ENCODE measurements at regions of chr6 and their contacts with region 1.

Region 1: GRCh38 chr6:31525932-31526591 is 2.7 kb upstream of the MCCD1 start:
- DNase-seq: peak; percentile 80
- H3K4me3 ChIP-seq: no peak overlapping the region
- H3K27ac ChIP-seq: peak overlapping the region; percentile 98
- H3K4me1 ChIP-seq: peaks cover 24% of the 10 kb centered on the region
- H3K27me3 ChIP-seq: no peaks in the 10 kb centered on the region
- CTCF ChIP-seq: no peak
- POLR2A ChIP-seq: no peak

Region 2: GRCh38 chr6:31541658-31542521 is 15.8 kb after region 1 on chr6 and contains the start of gene DDX39B:
- CTCF ChIA-PET with region 1: interaction called, 3 read pairs
- POLR2A ChIA-PET with region 1: interaction called, 4 read pairs
- dilution Hi-C with region 1: no loop called
- intact Hi-C with region 1: loop called (anchors 1 kb)
- DNase-seq: peak; percentile 97
- H3K4me3 ChIP-seq: peak within 1 kb of the TSS; percentile 59 to 95 (median 80)
- H3K27ac ChIP-seq: peak within 1 kb of the TSS; percentile 85
- H3K4me1 ChIP-seq: peaks cover 28% of the 10 kb centered on the region
- H3K27me3 ChIP-seq: no peaks in the 10 kb centered on the region
- CTCF ChIP-seq: no peak
- POLR2A ChIP-seq: peak; percentile 96
- total RNA-seq, gene DDX39B: 453 and 481 TPM in 2 replicates

Region 3: GRCh38 chr6:31559958-31560696 is 34.1 kb after region 1 on chr6:
- CTCF ChIA-PET with region 1: no interaction called
- POLR2A ChIA-PET with region 1: no interaction called
- dilution Hi-C with region 1: no loop called
- intact Hi-C with region 1: loop called (anchors 1 kb)
- DNase-seq: peak; percentile 99
- H3K4me3 ChIP-seq: peak overlapping the region in 1 of 3 experiments; percentile 29
- H3K27ac ChIP-seq: peak overlapping the region; percentile 98
- H3K4me1 ChIP-seq: peaks cover 69% of the 10 kb centered on the region
- H3K27me3 ChIP-seq: no peaks in the 10 kb centered on the region
- CTCF ChIP-seq: no peak
- POLR2A ChIP-seq: peak; percentile 71